Posterior vena cava (tissue), 2 donors: ENCODE measurements at regions of chr17 and their contacts with region 1.

Region 1: GRCh38 chr17:6666077-6666521 is 14.5 kb downstream of the C17orf100 start:
- DNase-seq: peak; percentile 91

Region 2: GRCh38 chr17:6775871-6776405 is 109.8 kb after region 1 on chr17 and contains the start of gene FBXO39:
- intact Hi-C with region 1: no loop called
- DNase-seq: no peak
- total RNA-seq, gene FBXO39: 0.67 TPM in 1 of 2 donors, not detected in the other

Region 3: GRCh38 chr17:6843241-6843880 is 177.3 kb after region 1 on chr17:
- intact Hi-C with region 1: loop called (anchors 5 kb)
- DNase-seq: no peak

Region 4: DNA sequence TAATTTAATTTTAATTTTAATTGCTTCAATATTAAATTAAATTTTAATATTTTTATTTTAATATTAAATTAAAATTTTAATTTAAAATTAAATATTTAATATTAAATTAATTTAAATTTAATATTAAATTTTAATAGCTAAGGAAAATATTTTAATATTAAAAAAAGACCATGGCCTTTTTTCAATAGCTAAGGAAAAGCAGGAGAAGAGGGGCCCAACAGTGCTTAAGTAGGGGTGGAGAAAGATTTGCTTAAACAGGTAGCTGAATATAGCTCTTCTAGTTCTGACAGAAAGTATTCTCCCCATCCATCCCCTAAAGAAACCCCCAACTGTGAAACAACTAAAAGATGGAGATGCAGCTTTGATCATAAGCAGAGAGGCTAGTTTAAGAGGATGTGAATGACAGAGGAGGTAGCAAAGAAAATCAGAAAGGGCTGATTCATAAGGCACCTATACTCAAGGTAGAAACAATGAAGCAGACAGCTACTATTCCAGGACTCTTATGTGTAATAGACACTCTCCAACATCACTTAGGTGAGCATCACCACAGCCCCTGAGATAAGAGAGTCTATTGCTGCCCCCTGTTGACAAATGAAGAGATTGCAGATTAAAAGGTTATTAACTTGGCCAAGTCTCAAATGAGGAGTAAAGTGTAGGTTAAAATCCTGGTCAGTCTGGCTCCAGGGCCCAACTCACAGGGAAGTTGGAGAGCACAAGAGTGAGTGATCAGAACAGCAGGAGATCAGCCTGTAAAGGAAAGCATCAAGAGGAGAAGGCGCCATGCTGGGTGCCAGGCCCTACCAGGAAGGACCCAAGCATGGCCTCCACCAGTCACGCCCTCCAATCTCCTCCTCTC is 338.5 kb after region 1 on chr17:
- intact Hi-C with region 1: loop called (anchors 10 kb)
- DNase-seq: no peak